ENCODE measurements at regions of chr10 and their contacts with region 1.

Region 1: GRCh38 chr10:100518761-100519241 is 860 bp downstream of the SEC31B start:
- DNase-seq: peak; percentile 73
- ATAC-seq: peak; percentile 41
- H3K4me3 ChIP-seq: no peak overlapping the region
- H3K27ac ChIP-seq: no peak overlapping the region
- H3K4me1 ChIP-seq: peaks cover 24% of the 10 kb centered on the region
- H3K27me3 ChIP-seq: no peaks in the 10 kb centered on the region
- CTCF ChIP-seq: peak; percentile 74

Region 2: GRCh38 chr10:100346765-100347567 is 171.8 kb before region 1 on chr10 and contains the start of gene SCD:
- CTCF ChIA-PET with region 1: interaction called, 21 read pairs
- POLR2A ChIA-PET with region 1: no interaction called
- intact Hi-C with region 1: loop called (anchors 5 kb)
- DNase-seq: peak; percentile 88
- ATAC-seq: peak; percentile 85
- H3K4me3 ChIP-seq: peak within 1 kb of the TSS; percentile 96
- H3K27ac ChIP-seq: peak within 1 kb of the TSS; percentile 47
- H3K4me1 ChIP-seq: peaks cover 28% of the 10 kb centered on the region
- H3K27me3 ChIP-seq: no peaks in the 10 kb centered on the region
- CTCF ChIP-seq: no peak
- total RNA-seq, gene SCD: 116 and 121 TPM in 2 replicates

Region 3: DNA sequence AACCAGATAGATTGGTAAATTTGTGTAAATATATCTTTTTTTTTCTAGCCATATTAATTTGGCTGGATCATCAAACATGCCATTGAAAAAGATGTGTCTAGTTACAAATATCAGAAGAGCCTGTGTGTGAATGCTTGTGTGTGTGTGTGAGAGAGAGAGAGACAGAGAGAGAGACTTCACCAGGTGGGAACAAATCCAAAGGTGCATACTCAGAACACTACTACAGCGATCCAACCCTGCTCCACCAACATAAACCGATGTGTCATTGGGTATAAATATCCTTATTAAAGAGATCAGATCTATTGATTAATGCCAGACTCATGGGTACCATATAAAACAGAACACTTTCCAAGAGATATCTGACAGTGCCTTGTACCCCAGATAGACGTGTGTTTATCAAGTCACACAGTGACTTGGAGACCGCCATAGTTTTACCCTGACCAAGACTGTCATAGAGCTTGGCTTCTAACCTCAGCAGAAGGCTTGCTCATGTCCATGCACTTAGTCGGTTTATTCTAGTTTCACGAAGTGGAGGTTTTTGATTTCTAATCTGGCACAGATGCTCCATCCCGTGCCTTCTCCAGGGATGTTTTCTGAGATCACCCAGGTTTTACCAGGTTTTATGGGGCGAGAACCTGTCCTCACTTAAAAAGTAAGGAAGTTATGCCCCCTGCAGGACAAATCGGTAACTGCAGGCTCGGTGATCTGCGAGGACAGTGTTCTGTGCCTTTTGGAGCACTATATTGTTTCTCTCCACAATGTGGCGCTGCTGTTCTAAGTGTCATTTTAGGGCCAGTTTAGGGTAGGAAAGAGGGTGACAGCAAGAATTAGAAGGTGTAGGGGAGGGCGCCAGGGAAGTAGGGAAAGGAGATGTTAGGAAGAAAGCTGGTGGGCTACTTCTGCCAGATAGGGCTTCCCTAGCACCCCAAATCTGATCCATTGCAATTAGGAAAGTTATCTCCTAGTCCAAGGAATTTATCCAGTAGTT is 85.3 kb before region 1 on chr10:
- CTCF ChIA-PET with region 1: interaction called, 5 read pairs
- POLR2A ChIA-PET with region 1: no interaction called
- intact Hi-C with region 1: loop called (anchors 1 kb)
- DNase-seq: peak; percentile 98
- ATAC-seq: peak; percentile 86
- H3K4me3 ChIP-seq: no peak overlapping the region
- H3K27ac ChIP-seq: no peak overlapping the region
- H3K4me1 ChIP-seq: peaks cover 4% of the 10 kb centered on the region; the same call in 1 of the 2 replicates
- H3K27me3 ChIP-seq: no peaks in the 10 kb centered on the region
- CTCF ChIP-seq: peak; percentile 99

Region 4: DNA sequence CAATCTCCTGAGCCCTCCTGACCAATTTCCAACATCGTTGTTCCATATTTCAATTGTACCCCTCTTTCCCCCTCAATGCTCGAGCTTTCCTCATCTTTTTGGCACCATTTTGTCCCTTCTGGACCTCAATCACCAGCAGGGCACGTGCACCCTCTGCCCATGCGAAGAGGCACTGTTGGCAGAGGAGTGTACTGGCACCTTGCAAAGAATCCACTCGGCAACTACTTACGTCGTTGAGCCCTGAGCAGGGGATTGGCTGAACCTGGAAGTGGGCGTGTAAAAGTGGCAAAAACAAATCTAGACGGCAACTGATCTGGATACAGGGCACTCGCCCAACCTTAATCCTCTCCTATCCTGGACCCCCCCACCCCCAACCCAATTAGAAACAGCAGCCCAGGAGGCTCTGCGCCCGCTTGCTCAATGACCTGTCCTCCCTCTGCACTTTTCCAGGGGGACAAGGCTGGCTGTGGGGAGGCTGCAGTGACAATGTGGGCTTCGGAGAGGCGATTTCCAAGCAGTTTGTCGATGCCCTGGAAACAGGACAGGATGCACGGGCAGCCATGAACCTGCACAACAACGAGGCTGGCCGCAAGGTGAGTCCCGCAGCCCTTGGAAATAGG is 37.2 kb before region 1 on chr10:
- CTCF ChIA-PET with region 1: interaction called, 20 read pairs
- POLR2A ChIA-PET with region 1: no interaction called
- intact Hi-C with region 1: no loop called
- DNase-seq: peak; percentile 91
- ATAC-seq: peak; percentile 95
- H3K4me3 ChIP-seq: peak overlapping the region; percentile 74
- H3K27ac ChIP-seq: no peak overlapping the region
- H3K4me1 ChIP-seq: no peaks in the 10 kb centered on the region
- H3K27me3 ChIP-seq: peaks cover 12% of the 10 kb centered on the region
- CTCF ChIP-seq: no peak

Region 5: DNA sequence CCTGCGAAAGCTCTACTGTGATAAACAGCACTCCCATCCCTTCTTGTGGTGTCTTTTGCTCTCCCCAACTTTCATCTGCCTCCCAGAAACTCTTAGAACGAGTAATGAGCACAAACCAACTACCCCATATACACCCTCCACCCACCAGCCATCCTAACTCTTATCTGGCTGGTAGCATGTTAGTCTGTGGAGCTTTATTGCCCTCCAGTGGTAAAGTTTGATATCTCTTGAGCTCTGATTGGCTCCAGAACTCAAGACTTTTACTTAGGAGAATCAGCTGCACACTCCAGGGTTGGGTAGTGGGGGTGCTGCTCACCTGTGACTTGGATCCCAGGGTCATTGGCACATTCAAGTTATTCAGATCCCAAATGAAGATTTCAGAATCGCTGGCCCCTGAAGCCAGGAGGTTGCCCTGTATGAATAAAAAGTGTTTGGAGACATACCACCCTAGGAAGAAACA is 10.1 kb before region 1 on chr10:
- CTCF ChIA-PET with region 1: interaction called, 15 read pairs
- POLR2A ChIA-PET with region 1: no interaction called
- intact Hi-C with region 1: no loop called
- DNase-seq: peak; percentile 67
- ATAC-seq: peak; percentile 79
- H3K4me3 ChIP-seq: no peak overlapping the region
- H3K27ac ChIP-seq: no peak overlapping the region
- H3K4me1 ChIP-seq: peaks cover 5% of the 10 kb centered on the region; the same call in 1 of the 2 replicates
- H3K27me3 ChIP-seq: no peaks in the 10 kb centered on the region
- CTCF ChIP-seq: peak; percentile 68

Region 6: GRCh38 chr10:100535715-100536353 is 17.0 kb after region 1 on chr10 and contains the start of gene HIF1AN:
- CTCF ChIA-PET with region 1: interaction called, 9 read pairs
- POLR2A ChIA-PET with region 1: interaction called, 13 read pairs
- intact Hi-C with region 1: no loop called
- DNase-seq: peak; percentile 90
- ATAC-seq: peak; percentile 97
- H3K4me3 ChIP-seq: peak within 1 kb of the TSS; percentile 88
- H3K27ac ChIP-seq: no peak within 1 kb of the TSS
- H3K4me1 ChIP-seq: peaks cover 18% of the 10 kb centered on the region; the same call in 1 of the 2 replicates
- H3K27me3 ChIP-seq: no peaks in the 10 kb centered on the region
- CTCF ChIP-seq: peak; percentile 77
- total RNA-seq, gene HIF1AN: 4.5 TPM in 2 replicates

Region 7: GRCh38 chr10:100878291-100878910 is 359.6 kb after region 1 on chr10:
- CTCF ChIA-PET with region 1: interaction called, 11 read pairs
- POLR2A ChIA-PET with region 1: no interaction called
- intact Hi-C with region 1: loop called (anchors 1 kb)
- DNase-seq: peak; percentile 71
- ATAC-seq: peak; percentile 96
- H3K4me3 ChIP-seq: no peak overlapping the region
- H3K27ac ChIP-seq: no peak overlapping the region
- H3K4me1 ChIP-seq: no peaks in the 10 kb centered on the region
- H3K27me3 ChIP-seq: no peaks in the 10 kb centered on the region
- CTCF ChIP-seq: peak; percentile 73